ENCODE measurements at regions of chr20 and their contacts with region 1.

Region 1: DNA sequence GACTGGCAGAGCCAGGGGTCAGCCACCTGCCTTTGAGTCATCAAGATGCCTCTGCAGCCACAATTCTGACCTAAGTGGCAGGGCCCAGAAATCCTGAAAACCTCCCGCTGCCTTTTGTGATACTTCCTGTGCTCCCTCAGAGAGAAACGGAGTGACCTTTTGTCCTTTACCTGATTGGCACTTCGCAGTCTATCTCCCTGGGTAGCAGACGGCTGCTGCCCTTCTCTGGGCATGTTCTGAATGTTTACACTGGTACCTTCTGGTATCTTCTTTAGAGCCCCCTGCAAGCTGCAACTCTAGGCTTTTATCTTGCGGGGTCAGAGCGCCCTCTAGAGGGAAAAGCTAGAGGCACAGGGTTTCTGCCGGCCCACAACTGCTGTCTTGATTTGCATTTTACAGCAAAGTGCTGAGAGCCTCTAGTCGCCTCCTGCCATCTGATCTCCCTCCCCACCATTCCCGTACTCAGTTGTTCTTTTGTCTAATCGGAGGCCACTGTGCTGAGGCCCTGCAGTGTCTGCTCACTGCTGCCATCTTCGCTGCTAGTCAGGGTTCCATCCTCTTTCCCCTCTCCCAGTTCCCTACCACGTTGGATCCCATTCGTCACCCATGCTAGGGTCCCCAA is 26.9 kb downstream of the SPATA2 start:
- DNase-seq: peak; percentile 9
- ATAC-seq: peak; percentile 88
- H3K4me3 ChIP-seq: no peak overlapping the region
- H3K27ac ChIP-seq: no peak overlapping the region
- H3K4me1 ChIP-seq: peaks cover 13% of the 10 kb centered on the region
- H3K27me3 ChIP-seq: no peaks in the 10 kb centered on the region
- CTCF ChIP-seq: peak; percentile 81 to 85 (median 84)
- EP300 ChIP-seq: no peak
- POLR2A ChIP-seq: no peak
- RAD21 ChIP-seq: peak; percentile 89

Region 2: DNA sequence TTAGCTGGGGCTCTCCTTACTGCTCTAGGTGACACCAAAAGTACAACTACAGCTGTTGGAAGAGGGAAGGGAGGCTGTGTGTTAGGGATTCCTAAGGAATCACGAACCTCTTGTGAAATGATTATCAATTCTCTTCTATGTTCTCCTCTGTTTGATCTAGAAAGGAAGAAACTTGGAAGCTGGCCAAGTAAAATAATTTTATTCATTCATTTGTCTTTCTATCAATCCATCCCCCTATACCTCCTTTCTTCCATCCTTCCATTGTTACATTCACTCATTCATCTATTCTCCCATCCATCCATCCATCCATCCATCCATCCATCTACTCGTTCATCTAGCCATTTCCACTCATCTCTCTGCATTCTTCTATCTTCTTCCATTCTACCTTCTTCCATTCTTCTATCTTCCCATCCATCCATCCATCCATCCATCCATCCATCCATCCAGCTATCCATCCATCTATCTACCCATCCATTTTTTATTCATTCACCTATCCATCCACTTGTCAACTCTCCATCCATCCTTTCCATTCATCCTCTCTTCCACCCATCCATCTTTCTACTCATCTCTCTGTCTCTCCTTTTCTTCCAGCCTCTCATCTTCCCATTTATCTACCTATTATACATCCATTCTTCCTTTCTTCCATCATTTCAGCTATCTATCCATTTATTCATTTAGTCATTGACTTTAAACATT is 557.8 kb before region 1 on chr20:
- CTCF ChIA-PET with region 1: interaction called, 3 read pairs
- POLR2A ChIA-PET with region 1: no interaction called
- RAD21 ChIA-PET with region 1: no interaction called
- SMC1A ChIA-PET with region 1: no interaction called
- in situ Hi-C with region 1: no loop called
- intact Hi-C with region 1: loop called (anchors 5 kb)
- DNase-seq: no peak
- ATAC-seq: no peak
- H3K4me3 ChIP-seq: no peak overlapping the region
- H3K27ac ChIP-seq: no peak overlapping the region
- H3K4me1 ChIP-seq: no peaks in the 10 kb centered on the region
- H3K27me3 ChIP-seq: peaks cover 0 to 5% of the 10 kb centered on the region in 2 experiments; a peak in 3 of 4 replicates
- CTCF ChIP-seq: no peak
- EP300 ChIP-seq: no peak
- POLR2A ChIP-seq: no peak
- RAD21 ChIP-seq: no peak

Measured in GM12878 (cell line).